CD8-positive, alpha-beta memory T cell (primary cell): ENCODE measurements at regions of chr1 and their contacts with region 1.

Region 1: GRCh38 chr1:116817582-116818064 is 63.4 kb downstream of the CD2 start:
- DNase-seq: peak; percentile 63 to 84 (median 69)
- H3K4me3 ChIP-seq: no peak overlapping the region
- H3K4me3 Mint-ChIP-seq: peak overlapping the region; percentile 47 to 78 (median 71)
- H3K27ac ChIP-seq: no peak overlapping the region
- H3K27ac Mint-ChIP-seq: peak overlapping the region; percentile 72 to 95 (median 88)
- H3K4me1 ChIP-seq: peaks cover 30% of the 10 kb centered on the region
- H3K4me1 Mint-ChIP-seq: peaks cover 38 to 53% (median 45%) of the 10 kb centered on the region in 3 donors
- H3K27me3 ChIP-seq: no peaks in the 10 kb centered on the region
- H3K27me3 Mint-ChIP-seq: no peaks in the 10 kb centered on the region

Region 2: DNA sequence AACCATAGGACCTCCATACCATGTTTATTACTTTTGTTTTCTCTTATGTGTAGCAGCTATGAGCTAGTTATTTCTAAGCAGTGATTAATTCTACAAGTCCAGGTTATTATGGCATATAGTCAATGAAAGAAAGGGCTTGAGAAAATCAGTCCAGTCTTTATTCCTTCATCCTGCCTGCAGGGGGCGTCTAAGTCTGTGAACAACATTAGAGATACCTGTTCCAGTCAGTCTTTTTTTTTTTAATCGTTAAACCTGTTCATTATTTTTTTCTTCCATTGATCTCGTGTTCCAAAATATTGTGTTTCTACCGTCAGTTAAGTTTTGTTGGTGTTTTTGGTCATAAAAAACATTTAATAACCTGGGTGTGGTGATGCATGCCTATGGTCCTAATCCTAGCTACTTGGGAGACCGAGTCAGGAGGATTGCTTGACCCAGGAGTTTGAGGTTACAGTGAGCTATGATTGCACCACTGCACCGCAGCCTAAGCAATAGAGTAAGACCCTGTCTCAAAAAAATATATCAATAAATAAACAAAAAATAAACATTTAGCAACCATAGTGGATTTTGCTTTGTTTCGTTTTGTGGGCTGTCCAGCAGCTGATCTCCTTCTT is 92.8 kb before region 1 on chr1:
- CTCF ChIA-PET with region 1: interaction called, 15 read pairs
- POLR2A ChIA-PET with region 1: no interaction called
- DNase-seq: peak; percentile 64 to 82 (median 68)
- H3K4me3 ChIP-seq: no peak overlapping the region
- H3K4me3 Mint-ChIP-seq: no peak overlapping the region
- H3K27ac ChIP-seq: no peak overlapping the region
- H3K27ac Mint-ChIP-seq: no peak overlapping the region
- H3K4me1 ChIP-seq: no peaks in the 10 kb centered on the region
- H3K4me1 Mint-ChIP-seq: peaks cover 16 to 27% (median 25%) of the 10 kb centered on the region in 3 donors
- H3K27me3 ChIP-seq: no peaks in the 10 kb centered on the region
- H3K27me3 Mint-ChIP-seq: no peaks in the 10 kb centered on the region

Region 3: DNA sequence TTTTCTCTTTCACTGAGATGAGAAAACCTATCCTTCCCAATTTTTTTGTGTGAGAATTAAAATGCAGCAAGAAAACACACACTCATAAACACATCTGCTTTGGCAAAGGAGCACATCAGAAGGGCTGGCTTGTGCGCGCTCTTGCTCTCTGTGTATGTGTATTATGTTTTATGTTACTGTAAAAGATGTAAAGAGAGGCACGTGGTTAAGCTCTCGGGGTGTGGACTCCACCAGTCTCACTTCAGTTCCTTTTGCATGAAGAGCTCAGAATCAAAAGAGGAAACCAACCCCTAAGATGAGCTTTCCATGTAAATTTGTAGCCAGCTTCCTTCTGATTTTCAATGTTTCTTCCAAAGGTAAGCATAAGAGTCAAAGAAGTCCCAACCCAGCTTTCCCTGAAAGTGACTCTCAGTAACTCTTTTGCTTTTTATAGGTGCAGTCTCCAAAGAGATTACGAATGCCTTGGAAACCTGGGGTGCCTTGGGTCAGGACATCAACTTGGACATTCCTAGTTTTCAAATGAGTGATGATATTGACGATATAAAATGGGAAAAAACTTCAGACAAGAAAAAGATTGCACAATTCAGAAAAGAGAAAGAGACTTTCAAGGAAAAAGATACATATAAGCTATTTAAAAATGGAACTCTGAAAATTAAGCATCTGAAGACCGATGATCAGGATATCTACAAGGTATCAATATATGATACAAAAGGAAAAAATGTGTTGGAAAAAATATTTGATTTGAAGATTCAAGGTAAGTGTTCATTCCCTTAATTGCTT is 63.2 kb before region 1 on chr1 and contains the start of gene CD2:
- CTCF ChIA-PET with region 1: interaction called, 16 read pairs
- POLR2A ChIA-PET with region 1: interaction called, 6 read pairs
- DNase-seq: peak in 3 of 5 donors; percentile 55 to 71 (median 70)
- H3K4me3 ChIP-seq: peak within 1 kb of the TSS; percentile 85
- H3K4me3 Mint-ChIP-seq: peak within 1 kb of the TSS; percentile 97 to 100 (median 99)
- H3K27ac ChIP-seq: peak within 1 kb of the TSS; percentile 76
- H3K27ac Mint-ChIP-seq: peak within 1 kb of the TSS; percentile 95 to 99 (median 98)
- H3K4me1 ChIP-seq: peaks cover 35% of the 10 kb centered on the region
- H3K4me1 Mint-ChIP-seq: peaks cover 35 to 48% (median 45%) of the 10 kb centered on the region in 3 donors
- H3K27me3 ChIP-seq: no peaks in the 10 kb centered on the region
- H3K27me3 Mint-ChIP-seq: peaks cover 0 to 2% of the 10 kb centered on the region in 2 donors
- total RNA-seq, gene CD2: 353 to 364 TPM

Region 4: GRCh38 chr1:116763787-116764465 is 53.7 kb before region 1 on chr1:
- CTCF ChIA-PET with region 1: interaction called, 144 read pairs
- POLR2A ChIA-PET with region 1: interaction called, 40 read pairs
- DNase-seq: peak in 3 of 5 donors; percentile 31 to 65 (median 39)
- H3K4me3 ChIP-seq: peak overlapping the region; percentile 64
- H3K4me3 Mint-ChIP-seq: peak overlapping the region; percentile 80 to 97 (median 89)
- H3K27ac ChIP-seq: peak overlapping the region; percentile 73
- H3K27ac Mint-ChIP-seq: peak overlapping the region; percentile 98 to 100 (median 98)
- H3K4me1 ChIP-seq: peaks cover 99% of the 10 kb centered on the region
- H3K4me1 Mint-ChIP-seq: peaks cover 94 to 100% (median 99%) of the 10 kb centered on the region in 3 donors
- H3K27me3 ChIP-seq: no peaks in the 10 kb centered on the region
- H3K27me3 Mint-ChIP-seq: peaks cover 0 to 1% of the 10 kb centered on the region in 2 donors

Region 5: GRCh38 chr1:116769561-116769977 is 48.1 kb before region 1 on chr1:
- CTCF ChIA-PET with region 1: interaction called, 144 read pairs
- POLR2A ChIA-PET with region 1: interaction called, 40 read pairs
- DNase-seq: peak; percentile 56 to 89 (median 88)
- H3K4me3 ChIP-seq: peak overlapping the region; percentile 41
- H3K4me3 Mint-ChIP-seq: peak overlapping the region; percentile 34 to 97 (median 82)
- H3K27ac ChIP-seq: peak overlapping the region; percentile 40
- H3K27ac Mint-ChIP-seq: peak overlapping the region; percentile 98 to 100 (median 98)
- H3K4me1 ChIP-seq: peaks cover 87% of the 10 kb centered on the region
- H3K4me1 Mint-ChIP-seq: peaks cover 88 to 92% (median 91%) of the 10 kb centered on the region in 3 donors
- H3K27me3 ChIP-seq: no peaks in the 10 kb centered on the region
- H3K27me3 Mint-ChIP-seq: no peaks in the 10 kb centered on the region

Region 6: GRCh38 chr1:116806245-116806644 is 11.4 kb before region 1 on chr1:
- CTCF ChIA-PET with region 1: interaction called, 41 read pairs
- POLR2A ChIA-PET with region 1: interaction called, 11 read pairs
- DNase-seq: peak in 4 of 5 donors; percentile 28 to 85 (median 54)
- H3K4me3 ChIP-seq: peak overlapping the region; percentile 46
- H3K4me3 Mint-ChIP-seq: peak overlapping the region; percentile 82 to 92 (median 85)
- H3K27ac ChIP-seq: peak overlapping the region; percentile 48
- H3K27ac Mint-ChIP-seq: peak overlapping the region; percentile 94 to 99 (median 96)
- H3K4me1 ChIP-seq: peaks cover 66% of the 10 kb centered on the region
- H3K4me1 Mint-ChIP-seq: peaks cover 82 to 97% (median 95%) of the 10 kb centered on the region in 3 donors
- H3K27me3 ChIP-seq: no peaks in the 10 kb centered on the region
- H3K27me3 Mint-ChIP-seq: no peaks in the 10 kb centered on the region

Region 7: DNA sequence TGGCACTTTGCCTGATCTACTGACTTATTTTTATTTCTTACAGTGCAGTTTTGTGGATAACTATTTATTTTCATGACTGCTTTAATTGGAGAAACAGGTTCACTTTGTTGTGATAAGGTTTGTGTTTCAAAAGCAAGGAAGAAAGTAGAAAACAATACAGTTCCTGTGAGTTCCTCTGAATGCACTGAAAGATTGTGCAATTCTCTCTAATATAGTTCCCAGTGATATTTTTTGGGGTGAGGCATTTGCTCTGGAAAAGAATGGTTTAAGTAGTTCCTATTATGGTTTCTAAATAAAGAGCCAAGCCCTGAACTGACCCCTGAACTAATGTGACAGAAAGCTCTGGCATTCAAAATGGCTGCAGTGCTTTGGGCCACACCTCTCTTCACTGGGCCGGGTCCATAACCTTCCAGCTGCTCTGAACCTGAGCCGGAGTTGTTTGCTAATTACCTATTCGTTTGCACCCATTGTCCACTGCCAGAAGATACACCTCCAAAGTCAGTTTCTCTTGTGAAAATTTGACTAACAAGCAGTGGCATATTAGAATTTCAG is 449.7 kb after region 1 on chr1:
- CTCF ChIA-PET with region 1: no interaction called
- POLR2A ChIA-PET with region 1: no interaction called
- DNase-seq: no peak
- H3K4me3 ChIP-seq: no peak overlapping the region
- H3K4me3 Mint-ChIP-seq: no peak overlapping the region
- H3K27ac ChIP-seq: no peak overlapping the region
- H3K27ac Mint-ChIP-seq: no peak overlapping the region
- H3K4me1 ChIP-seq: no peaks in the 10 kb centered on the region
- H3K4me1 Mint-ChIP-seq: no peaks in the 10 kb centered on the region
- H3K27me3 ChIP-seq: no peaks in the 10 kb centered on the region
- H3K27me3 Mint-ChIP-seq: peaks cover 9 to 13% of the 10 kb centered on the region in 2 donors